CD8-positive, alpha-beta memory T cell (primary cell): ENCODE measurements at regions of chr17 and their contacts with region 1.

Region 1: DNA sequence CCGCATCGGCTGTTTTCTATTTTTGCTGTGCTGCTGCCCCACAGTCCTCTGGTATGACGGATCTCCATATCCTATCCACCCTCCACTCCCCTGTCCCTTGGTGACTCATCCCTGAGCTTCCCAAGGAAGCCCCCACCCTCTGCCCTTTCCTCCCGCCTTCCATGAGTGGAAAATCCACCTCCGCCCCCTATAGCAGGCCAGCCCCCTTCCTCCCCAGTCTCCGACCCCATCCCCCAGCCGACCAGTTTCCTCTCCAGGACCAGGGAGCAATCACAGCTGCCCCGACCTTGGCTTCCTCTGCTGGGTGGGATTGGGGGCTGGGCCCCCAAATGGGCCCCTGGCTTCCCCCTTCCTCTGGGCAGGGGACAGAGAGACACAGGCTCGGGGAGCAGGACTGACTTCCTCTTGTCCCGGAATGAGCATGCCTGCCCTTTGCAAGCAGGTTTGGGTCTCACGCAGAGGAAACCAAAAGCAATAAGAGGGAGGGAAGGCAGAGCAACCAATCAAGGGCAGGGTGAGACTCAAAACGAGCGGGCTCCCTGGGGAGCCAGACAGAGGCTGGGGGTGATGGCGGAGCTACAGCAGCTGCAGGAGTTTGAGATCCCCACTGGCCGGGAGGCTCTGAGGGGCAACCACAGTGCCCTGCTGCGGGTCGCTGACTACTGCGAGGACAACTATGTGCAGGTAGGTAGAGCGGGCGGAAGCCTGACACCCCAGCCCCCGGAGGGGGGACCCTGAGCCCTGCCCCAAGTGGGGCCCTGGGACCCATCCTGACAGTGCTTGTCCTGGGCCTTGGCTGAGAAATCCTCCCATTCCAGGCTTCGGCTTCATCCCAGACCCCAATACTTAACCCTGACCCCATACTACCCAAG is at the starts of genes ABI3 and GNGT2:
- DNase-seq: peak; percentile 47 to 78 (median 70)
- H3K4me3 ChIP-seq: peak within 1 kb of the TSS; percentile 69
- H3K4me3 Mint-ChIP-seq: peak within 1 kb of the TSS; percentile 81 to 99 (median 98)
- H3K27ac ChIP-seq: peak within 1 kb of the TSS; percentile 57
- H3K27ac Mint-ChIP-seq: peak within 1 kb of the TSS; percentile 88 to 97 (median 94)
- H3K4me1 ChIP-seq: peaks cover 71% of the 10 kb centered on the region
- H3K4me1 Mint-ChIP-seq: peaks cover 67 to 79% (median 77%) of the 10 kb centered on the region in 3 donors
- H3K27me3 ChIP-seq: no peaks in the 10 kb centered on the region
- H3K27me3 Mint-ChIP-seq: no peaks in the 10 kb centered on the region
- total RNA-seq, gene ABI3: 46.4 to 48.5 TPM
- total RNA-seq, gene GNGT2: 24.0 to 26.5 TPM

Region 2: GRCh38 chr17:49223517-49224197 is 13.3 kb after region 1 on chr17:
- CTCF ChIA-PET with region 1: interaction called, 126 read pairs
- POLR2A ChIA-PET with region 1: interaction called, 11 read pairs
- DNase-seq: peak; percentile 50 to 75 (median 60)
- H3K4me3 ChIP-seq: peak overlapping the region; percentile 56
- H3K4me3 Mint-ChIP-seq: peak overlapping the region; percentile 81 to 91 (median 83)
- H3K27ac ChIP-seq: no peak overlapping the region
- H3K27ac Mint-ChIP-seq: peak overlapping the region; percentile 43 to 89 (median 82)
- H3K4me1 ChIP-seq: peaks cover 56% of the 10 kb centered on the region
- H3K4me1 Mint-ChIP-seq: peaks cover 36 to 74% (median 41%) of the 10 kb centered on the region in 3 donors
- H3K27me3 ChIP-seq: no peaks in the 10 kb centered on the region
- H3K27me3 Mint-ChIP-seq: no peaks in the 10 kb centered on the region

Region 3: GRCh38 chr17:49230636-49231562 is 20.5 kb after region 1 on chr17 and contains the start of gene PHOSPHO1:
- CTCF ChIA-PET with region 1: interaction called, 126 read pairs
- POLR2A ChIA-PET with region 1: interaction called, 7 read pairs
- DNase-seq: peak; percentile 85 to 93 (median 85)
- H3K4me3 ChIP-seq: peak within 1 kb of the TSS; percentile 91
- H3K4me3 Mint-ChIP-seq: peak within 1 kb of the TSS; percentile 72 to 95 (median 85)
- H3K27ac ChIP-seq: no peak within 1 kb of the TSS
- H3K27ac Mint-ChIP-seq: peak within 1 kb of the TSS in 7 of 8 donors; percentile 61 to 96 (median 78)
- H3K4me1 ChIP-seq: peaks cover 20% of the 10 kb centered on the region
- H3K4me1 Mint-ChIP-seq: peaks cover 12 to 41% (median 17%) of the 10 kb centered on the region in 3 donors
- H3K27me3 ChIP-seq: no peaks in the 10 kb centered on the region
- H3K27me3 Mint-ChIP-seq: peaks cover 6 to 9% of the 10 kb centered on the region in 2 donors
- total RNA-seq, gene PHOSPHO1: not detected

Region 4: GRCh38 chr17:49337884-49338283 is 127.5 kb after region 1 on chr17:
- CTCF ChIA-PET with region 1: no interaction called
- POLR2A ChIA-PET with region 1: no interaction called
- DNase-seq: no peak
- H3K4me3 ChIP-seq: no peak overlapping the region
- H3K4me3 Mint-ChIP-seq: peak overlapping the region in 5 of 7 donors; percentile 10 to 77 (median 15)
- H3K27ac ChIP-seq: no peak overlapping the region
- H3K27ac Mint-ChIP-seq: peak overlapping the region; percentile 3 to 90 (median 70)
- H3K4me1 ChIP-seq: peaks cover 42% of the 10 kb centered on the region
- H3K4me1 Mint-ChIP-seq: peaks cover 51 to 77% (median 72%) of the 10 kb centered on the region in 3 donors
- H3K27me3 ChIP-seq: no peaks in the 10 kb centered on the region
- H3K27me3 Mint-ChIP-seq: no peaks in the 10 kb centered on the region